KBM-7 (cell line): ENCODE measurements at regions of chr20 and their contacts with region 1.

Region 1: DNA sequence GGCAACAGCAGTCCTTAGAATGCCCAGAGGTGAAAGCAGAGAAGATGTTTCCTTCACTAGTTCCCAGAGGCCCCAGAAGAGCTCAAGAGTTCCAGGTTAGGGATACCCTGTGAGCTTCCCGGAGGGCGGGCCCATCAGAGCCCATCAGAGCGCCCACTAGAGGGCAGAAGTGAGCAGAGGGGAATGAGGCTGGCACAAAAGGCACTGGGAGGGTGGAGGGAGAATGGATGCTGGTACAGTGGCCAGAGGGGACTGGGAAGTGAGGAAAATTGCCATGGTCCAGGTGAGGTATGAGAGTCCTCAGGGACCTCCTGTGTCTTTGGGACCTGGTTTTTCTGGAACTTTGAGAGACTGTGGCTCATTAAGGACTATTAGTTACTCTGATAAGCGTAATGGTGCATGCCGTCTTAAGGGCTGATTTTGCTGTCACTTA is 57.3 kb downstream of the LINC00237 start:
- DNase-seq: peak; percentile 57

Region 2: GRCh38 chr20:20806121-20807095 is 242.4 kb before region 1 on chr20:
- in situ Hi-C with region 1: no loop called
- DNase-seq: no peak

Region 3: DNA sequence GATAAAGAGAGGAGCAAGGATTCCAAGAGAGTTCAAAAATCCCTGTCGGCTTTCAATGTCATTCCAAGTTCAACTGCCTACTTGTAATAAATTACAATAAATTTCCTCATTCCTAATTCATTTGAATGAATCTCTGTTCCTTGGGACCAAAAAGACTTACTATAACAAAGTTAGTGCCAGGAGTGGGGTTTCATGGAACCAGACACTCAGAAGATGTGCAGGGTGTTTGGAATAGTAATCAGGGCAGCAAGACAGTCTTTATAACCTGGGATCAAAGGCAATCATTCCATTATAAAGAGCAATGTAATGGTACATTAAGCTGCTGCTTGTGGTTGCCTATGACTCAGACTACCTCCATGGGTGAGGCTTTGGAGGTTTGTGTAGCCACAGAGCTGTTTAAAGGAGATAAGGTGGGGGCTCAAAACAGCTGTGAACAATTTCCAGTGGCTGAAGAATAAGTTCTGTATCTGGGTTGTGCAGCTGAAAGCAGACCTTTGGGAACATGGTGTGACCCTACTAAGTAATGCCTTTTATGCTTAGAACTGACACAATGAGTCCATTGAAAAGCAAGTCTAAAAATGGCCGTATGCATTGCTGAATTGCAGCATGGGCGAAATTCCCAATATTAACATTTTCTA is 102.6 kb before region 1 on chr20:
- in situ Hi-C with region 1: loop called (anchors 25 kb)
- DNase-seq: no peak

Region 4: GRCh38 chr20:21450572-21450971 is 401.7 kb after region 1 on chr20:
- in situ Hi-C with region 1: no loop called
- DNase-seq: no peak